AG04449 (cell line): ENCODE measurements at regions of chr10 and their contacts with region 1.

Region 1: GRCh38 chr10:17617031-17617911 is at the start of gene HACD1:
- DNase-seq: no peak
- H3K4me3 ChIP-seq: peak within 1 kb of the TSS; percentile 74
- CTCF ChIP-seq: peak; percentile 49

Region 2: GRCh38 chr10:17161775-17162174 is 455.5 kb before region 1 on chr10:
- CTCF ChIA-PET with region 1: no interaction called
- POLR2A ChIA-PET with region 1: no interaction called
- DNase-seq: no peak
- H3K4me3 ChIP-seq: no peak overlapping the region
- CTCF ChIP-seq: no peak

Region 3: GRCh38 chr10:17742918-17743317 is 125.6 kb after region 1 on chr10:
- CTCF ChIA-PET with region 1: interaction called, 27 read pairs
- POLR2A ChIA-PET with region 1: no interaction called
- DNase-seq: no peak
- H3K4me3 ChIP-seq: no peak overlapping the region
- CTCF ChIP-seq: peak; percentile 70